Activated T-helper 1 cell treated with anti-CD3 and anti-CD28 coated beads, Interleukin-12 subunit alpha, Interleukin-12 subunit beta, Interleukin-2, Interleukin-4 antibody, amounts not matched to agents 30 ng/mL and 10 ng/mL and 1 ng/mL, durations not matched to agents 14 hours and 24 hours and 36 hours (primary cell): ENCODE measurements at regions of chr6 and their contacts with region 1.

Region 1: DNA sequence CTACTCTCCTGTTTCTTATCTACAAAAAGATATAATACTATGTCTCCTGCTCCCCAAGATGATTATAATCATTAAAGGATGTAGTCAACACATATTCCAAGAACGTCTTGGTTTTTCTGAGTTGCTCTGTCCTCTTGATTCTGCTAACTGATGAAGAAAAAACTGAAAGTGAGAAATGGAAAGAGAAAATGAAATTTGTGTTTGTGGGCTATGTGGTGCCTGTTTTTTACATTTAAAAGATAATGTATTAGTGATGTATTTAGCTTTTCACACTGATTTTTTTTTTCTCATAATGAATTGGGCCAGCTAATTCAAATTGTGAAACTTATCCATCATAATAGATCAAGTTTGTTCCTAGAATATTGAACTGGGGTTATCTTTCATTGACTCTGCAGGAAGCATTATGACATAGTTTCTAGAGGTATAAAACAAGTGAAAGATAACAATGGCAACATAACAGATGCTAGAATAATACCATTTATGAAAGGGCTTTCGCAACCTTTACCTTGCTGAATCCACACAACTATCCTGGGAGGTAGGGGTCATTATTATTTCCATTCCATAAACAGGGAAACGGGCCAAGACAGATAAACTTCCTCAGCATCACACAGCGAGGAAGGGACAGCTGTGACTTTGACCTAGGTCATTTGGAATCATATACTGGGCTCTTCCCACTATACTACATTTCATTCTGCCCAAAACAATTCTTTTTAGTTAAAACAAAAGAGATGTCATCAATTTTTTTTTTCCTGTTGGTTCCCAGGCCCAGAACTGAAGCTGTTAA is 336.7 kb downstream of the GJA1 start:
- DNase-seq: no peak
- H3K4me3 Mint-ChIP-seq: peak overlapping the region; percentile 25
- H3K27ac Mint-ChIP-seq: peak overlapping the region; percentile 81
- H3K4me1 Mint-ChIP-seq: peaks cover 39% of the 10 kb centered on the region
- H3K27me3 Mint-ChIP-seq: peaks cover 2% of the 10 kb centered on the region

Region 2: DNA sequence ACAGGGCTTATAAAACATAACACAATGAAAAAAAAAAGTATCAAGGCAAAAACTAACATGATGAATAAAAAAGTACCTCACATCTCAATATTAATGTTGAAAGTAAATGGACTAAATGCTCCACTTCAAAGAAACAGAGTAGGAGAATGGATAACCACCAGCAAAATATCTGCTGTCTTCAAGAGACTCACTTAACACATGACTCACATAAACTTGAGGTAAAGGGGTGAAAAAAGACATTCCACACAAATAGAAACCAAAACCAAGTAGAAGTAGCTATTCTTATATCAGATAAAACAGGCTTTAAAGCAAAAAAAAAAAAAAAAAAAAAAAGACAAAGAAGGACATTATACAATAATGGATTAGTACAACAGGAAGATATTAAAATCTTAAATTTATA is 524.7 kb before region 1 on chr6:
- intact Hi-C with region 1: loop called (anchors 2 kb)
- DNase-seq: no peak
- H3K4me3 Mint-ChIP-seq: no peak overlapping the region
- H3K27ac Mint-ChIP-seq: peak overlapping the region; percentile 21
- H3K4me1 Mint-ChIP-seq: peaks cover 15% of the 10 kb centered on the region
- H3K27me3 Mint-ChIP-seq: no peaks in the 10 kb centered on the region

Region 3: GRCh38 chr6:121645100-121645745 is 126.9 kb before region 1 on chr6:
- intact Hi-C with region 1: loop called (anchors 1 kb)
- DNase-seq: no peak
- H3K4me3 Mint-ChIP-seq: no peak overlapping the region
- H3K27ac Mint-ChIP-seq: no peak overlapping the region
- H3K4me1 Mint-ChIP-seq: peaks cover 20% of the 10 kb centered on the region
- H3K27me3 Mint-ChIP-seq: no peaks in the 10 kb centered on the region

Region 4: DNA sequence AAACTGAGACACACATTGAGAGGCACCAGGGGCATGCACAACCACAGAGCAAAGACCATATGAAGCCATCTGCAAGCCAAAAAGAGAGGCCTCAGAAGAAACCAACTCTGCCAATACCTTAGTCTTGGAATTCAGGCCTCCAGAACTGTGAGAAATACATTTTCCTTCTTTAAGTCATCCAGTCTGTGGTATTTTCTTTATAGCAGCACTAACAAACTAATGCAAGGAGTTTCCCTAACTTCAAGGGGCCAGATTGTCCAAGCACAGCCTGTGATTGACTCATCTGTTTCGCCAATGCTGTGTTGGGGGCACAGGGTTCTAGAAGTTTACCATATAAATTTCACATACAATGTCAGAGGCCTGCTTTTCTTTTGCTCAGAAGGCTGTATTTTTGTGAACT is 27.9 kb after region 1 on chr6:
- intact Hi-C with region 1: no loop called
- DNase-seq: no peak
- H3K4me3 Mint-ChIP-seq: no peak overlapping the region
- H3K27ac Mint-ChIP-seq: no peak overlapping the region
- H3K4me1 Mint-ChIP-seq: no peaks in the 10 kb centered on the region
- H3K27me3 Mint-ChIP-seq: no peaks in the 10 kb centered on the region